Esophagus squamous epithelium (tissue), 5 donors: ENCODE measurements at regions of chr10 and their contacts with region 1.

Region 1: GRCh38 chr10:124916585-124917427 is 25.1 kb upstream of the ZRANB1 start:
- DNase-seq: peak; percentile 91
- H3K4me3 ChIP-seq: peak overlapping the region; percentile 71 to 92 (median 80)
- H3K27ac ChIP-seq: peak overlapping the region; percentile 98 to 99 (median 99)
- H3K4me1 ChIP-seq: peaks cover 11 to 56% (median 14%) of the 10 kb centered on the region in 3 donors
- H3K27me3 ChIP-seq: no peaks in the 10 kb centered on the region
- CTCF ChIP-seq: no peak
- POLR2A ChIP-seq: peak in 3 of 4 donors; percentile 31 to 95 (median 88)

Region 2: GRCh38 chr10:124741281-124741921 is 175.4 kb before region 1 on chr10:
- intact Hi-C with region 1: loop called (anchors 5 kb)
- DNase-seq: no peak
- H3K4me3 ChIP-seq: peak overlapping the region; percentile 9 to 89 (median 78)
- H3K27ac ChIP-seq: peak overlapping the region; percentile 93 to 95 (median 94)
- H3K4me1 ChIP-seq: peaks cover 69 to 89% (median 80%) of the 10 kb centered on the region in 3 donors
- H3K27me3 ChIP-seq: no peaks in the 10 kb centered on the region
- CTCF ChIP-seq: peak; percentile 76 to 98 (median 94)
- POLR2A ChIP-seq: no peak

Region 3: GRCh38 chr10:124842721-124843120 is 74.1 kb before region 1 on chr10:
- intact Hi-C with region 1: no loop called
- DNase-seq: no peak
- H3K4me3 ChIP-seq: no peak overlapping the region
- H3K27ac ChIP-seq: no peak overlapping the region
- H3K4me1 ChIP-seq: no peaks in the 10 kb centered on the region
- H3K27me3 ChIP-seq: no peaks in the 10 kb centered on the region
- CTCF ChIP-seq: no peak
- POLR2A ChIP-seq: no peak

Region 4: DNA sequence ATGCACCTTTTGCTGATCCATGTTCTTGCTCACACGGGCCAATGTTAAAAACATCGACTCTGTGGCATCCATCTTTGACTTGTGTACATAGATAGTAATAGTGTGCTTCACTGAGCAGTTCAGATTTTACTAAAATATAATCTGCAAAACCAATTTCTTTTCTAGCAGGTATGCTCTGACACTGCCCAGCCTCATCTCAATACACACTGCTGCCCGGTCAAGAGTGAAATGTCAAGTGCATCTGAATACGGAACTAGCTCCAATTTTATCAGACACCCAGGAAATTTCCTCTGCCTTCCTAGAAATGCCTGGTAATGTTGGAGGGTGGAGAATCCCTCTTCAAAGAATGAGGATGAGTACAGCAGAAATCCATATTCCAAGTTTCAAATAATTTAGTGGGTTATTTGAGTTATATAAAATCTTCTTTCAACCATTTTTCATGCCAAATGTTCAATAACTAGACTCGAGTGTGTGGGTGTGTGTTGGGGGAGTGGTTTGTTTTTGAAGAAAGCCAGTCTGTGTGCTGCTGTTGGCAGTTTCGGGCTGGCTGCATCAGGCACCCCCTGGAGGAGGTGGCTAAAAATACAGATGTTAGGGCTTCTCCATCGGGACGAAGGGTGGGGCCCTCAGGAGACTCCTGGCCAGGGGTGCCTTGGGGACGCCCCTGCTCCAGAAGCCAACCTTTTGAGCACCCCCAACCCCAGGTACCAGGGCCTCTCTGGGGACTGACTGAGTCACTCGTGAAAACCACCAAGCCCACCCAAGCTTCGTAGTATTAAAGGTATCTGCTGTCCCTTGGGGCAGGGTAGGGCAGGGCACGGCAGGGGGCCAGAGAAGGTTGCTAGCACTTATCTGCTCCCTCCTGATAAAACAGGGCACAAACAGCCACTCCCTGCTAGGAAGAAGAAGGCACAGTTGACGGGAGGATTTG is 228.2 kb after region 1 on chr10:
- intact Hi-C with region 1: loop called (anchors 10 kb)
- DNase-seq: no peak
- H3K4me3 ChIP-seq: no peak overlapping the region
- H3K27ac ChIP-seq: peak overlapping the region; percentile 7 to 97 (median 37)
- H3K4me1 ChIP-seq: peaks cover 47 to 89% (median 62%) of the 10 kb centered on the region in 3 donors
- H3K27me3 ChIP-seq: no peaks in the 10 kb centered on the region
- CTCF ChIP-seq: peak in 5 of 6 experiments; percentile 7 to 53 (median 28)
- POLR2A ChIP-seq: no peak

Region 5: GRCh38 chr10:125316449-125316848 is 399.6 kb after region 1 on chr10:
- intact Hi-C with region 1: no loop called
- DNase-seq: no peak
- H3K4me3 ChIP-seq: no peak overlapping the region
- H3K27ac ChIP-seq: no peak overlapping the region
- H3K4me1 ChIP-seq: no peaks in the 10 kb centered on the region
- H3K27me3 ChIP-seq: no peaks in the 10 kb centered on the region
- CTCF ChIP-seq: no peak
- POLR2A ChIP-seq: no peak